Activated CD8-positive, alpha-beta T cell treated with anti-CD3 and anti-CD28 coated beads for 36 hours (primary cell): ENCODE measurements at regions of chr2 and their contacts with region 1.

Region 1: GRCh38 chr2:62456721-62457539 is 49.1 kb downstream of the TMEM17 start:
- DNase-seq: peak; percentile 68
- ATAC-seq: peak; percentile 97
- H3K4me3 Mint-ChIP-seq: peak overlapping the region; percentile 32
- H3K27ac Mint-ChIP-seq: no peak overlapping the region
- H3K4me1 Mint-ChIP-seq: no peaks in the 10 kb centered on the region
- H3K27me3 Mint-ChIP-seq: peaks cover 8% of the 10 kb centered on the region
- CTCF ChIP-seq: peak; percentile 96

Region 2: DNA sequence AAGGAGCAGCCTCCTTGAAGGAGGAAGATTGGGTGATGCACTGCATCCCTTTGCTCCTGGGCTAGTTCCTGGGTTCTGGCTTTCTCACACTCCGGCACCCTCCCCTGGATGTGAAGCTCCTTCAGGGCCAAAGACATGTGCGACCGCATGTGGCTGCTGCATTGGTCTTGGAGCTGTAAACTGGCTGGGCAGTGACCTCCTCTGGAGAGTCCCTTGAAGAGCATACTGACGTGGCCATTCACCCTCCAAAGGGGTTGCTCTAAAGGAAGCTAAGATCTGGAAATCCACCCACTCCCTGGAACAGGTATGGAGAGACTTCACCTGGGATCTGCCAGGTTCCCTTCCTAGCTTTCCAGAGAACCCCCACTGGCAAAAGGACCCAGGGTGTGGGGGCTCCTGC is 13.0 kb before region 1 on chr2:
- CTCF ChIA-PET with region 1: interaction called, 19 read pairs
- POLR2A ChIA-PET with region 1: no interaction called
- intact Hi-C with region 1: no loop called
- DNase-seq: no peak
- ATAC-seq: no peak
- H3K4me3 Mint-ChIP-seq: no peak overlapping the region
- H3K27ac Mint-ChIP-seq: no peak overlapping the region
- H3K4me1 Mint-ChIP-seq: no peaks in the 10 kb centered on the region
- H3K27me3 Mint-ChIP-seq: no peaks in the 10 kb centered on the region
- CTCF ChIP-seq: no peak

Region 3: DNA sequence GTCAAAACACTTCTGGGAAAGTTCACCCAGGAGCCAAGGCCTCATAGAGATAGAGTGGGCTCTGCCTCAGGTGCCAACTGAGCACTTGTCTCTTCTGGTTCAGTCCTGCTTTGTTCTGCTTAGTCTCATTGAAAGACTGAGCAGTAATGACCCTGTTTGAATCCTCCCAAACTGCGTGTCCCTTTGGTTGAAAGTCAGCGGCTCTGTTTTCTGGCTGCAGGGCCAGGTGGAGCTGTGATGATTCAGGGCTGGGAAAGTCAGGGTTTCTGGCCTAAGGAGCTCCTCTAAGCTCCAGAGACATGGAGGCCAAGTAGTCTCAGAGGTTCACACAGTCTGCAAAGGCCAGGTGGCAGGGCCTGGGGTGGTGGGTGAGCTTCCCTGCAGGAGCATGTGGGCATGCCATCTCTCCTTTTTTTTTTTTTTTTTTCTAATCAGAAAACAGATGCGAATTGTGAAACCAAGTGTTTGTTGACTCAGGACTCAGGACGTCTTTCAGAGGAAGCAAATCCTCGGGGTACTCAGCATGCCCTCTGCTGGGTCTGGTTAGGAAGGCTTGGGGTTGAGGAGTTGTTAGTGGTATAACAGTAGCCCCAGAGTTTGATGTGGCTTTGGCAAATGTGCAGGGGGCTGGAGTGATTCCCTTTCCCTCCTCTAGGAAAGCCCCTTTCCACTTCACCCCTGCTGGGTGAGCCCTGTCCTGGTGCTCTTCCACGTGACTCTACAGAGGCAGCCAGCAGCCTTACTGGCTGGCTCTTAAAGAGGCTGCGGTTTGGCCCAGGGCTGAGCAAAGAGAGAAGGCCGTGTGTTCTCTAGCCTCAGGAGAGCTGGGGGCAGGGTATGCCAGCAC is 10.8 kb after region 1 on chr2:
- CTCF ChIA-PET with region 1: interaction called, 20 read pairs
- POLR2A ChIA-PET with region 1: no interaction called
- intact Hi-C with region 1: no loop called
- DNase-seq: no peak
- ATAC-seq: no peak
- H3K4me3 Mint-ChIP-seq: no peak overlapping the region
- H3K27ac Mint-ChIP-seq: no peak overlapping the region
- H3K4me1 Mint-ChIP-seq: no peaks in the 10 kb centered on the region
- H3K27me3 Mint-ChIP-seq: no peaks in the 10 kb centered on the region
- CTCF ChIP-seq: no peak

Region 4: GRCh38 chr2:62475172-62476011 is 18.5 kb after region 1 on chr2:
- CTCF ChIA-PET with region 1: interaction called, 22 read pairs
- POLR2A ChIA-PET with region 1: no interaction called
- intact Hi-C with region 1: no loop called
- DNase-seq: peak; percentile 9
- ATAC-seq: peak; percentile 56
- H3K4me3 Mint-ChIP-seq: peak overlapping the region; percentile 7
- H3K27ac Mint-ChIP-seq: no peak overlapping the region
- H3K4me1 Mint-ChIP-seq: peaks cover 4% of the 10 kb centered on the region
- H3K27me3 Mint-ChIP-seq: peaks cover 2% of the 10 kb centered on the region
- CTCF ChIP-seq: no peak

Region 5: DNA sequence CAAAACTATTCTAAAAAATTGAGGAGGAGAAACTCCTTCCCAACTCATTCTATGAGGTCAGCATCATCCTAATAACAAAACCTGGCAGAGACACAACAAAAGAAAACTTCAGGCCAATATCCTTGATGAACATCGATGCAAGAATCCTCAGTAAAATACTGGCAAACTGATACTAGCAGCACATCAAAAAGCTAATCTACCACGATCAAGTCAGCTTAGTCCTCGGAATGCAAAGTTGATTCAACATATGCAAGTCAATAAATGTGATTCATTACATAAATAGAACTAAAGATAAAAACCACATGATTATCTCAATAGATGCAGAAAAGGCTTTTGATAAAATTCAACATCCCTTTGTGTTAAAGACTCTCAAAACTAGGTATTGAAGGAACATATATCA is 311.7 kb after region 1 on chr2:
- CTCF ChIA-PET with region 1: interaction called, 14 read pairs
- POLR2A ChIA-PET with region 1: no interaction called
- intact Hi-C with region 1: no loop called
- DNase-seq: no peak
- ATAC-seq: no peak
- H3K4me3 Mint-ChIP-seq: no peak overlapping the region
- H3K27ac Mint-ChIP-seq: no peak overlapping the region
- H3K4me1 Mint-ChIP-seq: no peaks in the 10 kb centered on the region
- H3K27me3 Mint-ChIP-seq: no peaks in the 10 kb centered on the region
- CTCF ChIP-seq: no peak

Region 6: DNA sequence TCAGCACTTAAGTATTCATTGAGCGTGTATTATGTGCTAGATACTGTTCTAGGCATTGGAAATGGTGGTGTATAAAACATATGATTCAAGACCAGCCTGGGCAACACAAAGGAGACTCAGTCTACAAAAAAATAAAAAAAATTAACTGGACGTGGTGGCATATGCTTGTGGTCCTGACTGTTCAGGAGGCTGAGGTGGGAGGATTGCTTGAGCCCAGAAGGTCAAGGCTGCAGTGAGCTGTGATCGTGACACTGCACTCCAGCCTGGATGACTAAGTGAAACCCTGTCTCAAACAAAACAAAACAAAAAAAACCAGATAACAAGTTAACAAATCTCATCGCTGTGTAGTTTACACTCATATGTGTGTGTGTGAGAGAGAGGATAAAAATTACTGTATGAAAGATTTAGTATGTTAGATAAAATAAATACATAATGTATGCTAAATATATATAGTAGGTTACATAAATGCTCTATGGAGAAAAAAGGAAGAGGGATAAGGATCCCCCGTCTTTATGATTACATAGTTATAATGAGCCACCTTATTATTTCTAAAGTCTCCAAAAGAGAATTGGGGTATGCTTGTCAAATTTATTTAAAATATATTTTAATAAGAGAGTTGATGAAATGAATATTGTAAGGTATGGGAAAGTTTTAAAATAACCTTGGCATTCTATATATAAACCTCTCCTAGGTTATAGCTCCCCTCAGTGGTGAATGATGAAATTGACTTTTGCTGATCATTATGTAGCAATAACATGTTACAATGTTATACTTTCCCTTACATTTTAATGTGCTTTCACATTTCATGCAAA is 317.8 kb after region 1 on chr2:
- CTCF ChIA-PET with region 1: interaction called, 105 read pairs
- POLR2A ChIA-PET with region 1: no interaction called
- intact Hi-C with region 1: loop called (anchors 2 kb)
- DNase-seq: no peak
- ATAC-seq: no peak
- H3K4me3 Mint-ChIP-seq: no peak overlapping the region
- H3K27ac Mint-ChIP-seq: no peak overlapping the region
- H3K4me1 Mint-ChIP-seq: no peaks in the 10 kb centered on the region
- H3K27me3 Mint-ChIP-seq: no peaks in the 10 kb centered on the region
- CTCF ChIP-seq: peak; percentile 93

Region 7: DNA sequence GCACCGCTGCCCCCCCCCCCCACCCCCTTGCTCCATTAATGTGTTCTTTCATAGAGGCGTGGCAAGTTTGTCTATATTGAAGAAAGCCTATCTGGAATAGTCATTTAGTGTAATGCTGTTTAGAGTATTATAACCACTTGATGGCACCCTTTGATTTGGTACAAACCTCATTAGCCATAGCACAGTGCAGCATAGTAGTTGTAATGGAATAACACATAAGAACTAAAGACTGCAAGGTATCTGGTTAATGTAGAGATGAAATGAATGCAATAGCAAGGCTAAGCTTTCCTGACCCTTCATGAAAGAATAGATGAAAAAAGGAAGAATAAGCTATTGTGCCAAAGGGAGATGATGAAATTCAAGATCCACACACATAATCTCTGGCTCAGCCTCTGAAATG is 330.5 kb after region 1 on chr2:
- CTCF ChIA-PET with region 1: interaction called, 22 read pairs
- POLR2A ChIA-PET with region 1: no interaction called
- intact Hi-C with region 1: no loop called
- DNase-seq: no peak
- ATAC-seq: peak; percentile 58
- H3K4me3 Mint-ChIP-seq: no peak overlapping the region
- H3K27ac Mint-ChIP-seq: no peak overlapping the region
- H3K4me1 Mint-ChIP-seq: peaks cover 20% of the 10 kb centered on the region
- H3K27me3 Mint-ChIP-seq: no peaks in the 10 kb centered on the region
- CTCF ChIP-seq: no peak